Activated CD4-positive, alpha-beta T cell treated with anti-CD3 and anti-CD28 coated beads, Interleukin-2, amount 10 ng/mL, durations not matched to agents 7 days and 5 days (primary cell): ENCODE measurements at regions of chr17 and their contacts with region 1.

Region 1: DNA sequence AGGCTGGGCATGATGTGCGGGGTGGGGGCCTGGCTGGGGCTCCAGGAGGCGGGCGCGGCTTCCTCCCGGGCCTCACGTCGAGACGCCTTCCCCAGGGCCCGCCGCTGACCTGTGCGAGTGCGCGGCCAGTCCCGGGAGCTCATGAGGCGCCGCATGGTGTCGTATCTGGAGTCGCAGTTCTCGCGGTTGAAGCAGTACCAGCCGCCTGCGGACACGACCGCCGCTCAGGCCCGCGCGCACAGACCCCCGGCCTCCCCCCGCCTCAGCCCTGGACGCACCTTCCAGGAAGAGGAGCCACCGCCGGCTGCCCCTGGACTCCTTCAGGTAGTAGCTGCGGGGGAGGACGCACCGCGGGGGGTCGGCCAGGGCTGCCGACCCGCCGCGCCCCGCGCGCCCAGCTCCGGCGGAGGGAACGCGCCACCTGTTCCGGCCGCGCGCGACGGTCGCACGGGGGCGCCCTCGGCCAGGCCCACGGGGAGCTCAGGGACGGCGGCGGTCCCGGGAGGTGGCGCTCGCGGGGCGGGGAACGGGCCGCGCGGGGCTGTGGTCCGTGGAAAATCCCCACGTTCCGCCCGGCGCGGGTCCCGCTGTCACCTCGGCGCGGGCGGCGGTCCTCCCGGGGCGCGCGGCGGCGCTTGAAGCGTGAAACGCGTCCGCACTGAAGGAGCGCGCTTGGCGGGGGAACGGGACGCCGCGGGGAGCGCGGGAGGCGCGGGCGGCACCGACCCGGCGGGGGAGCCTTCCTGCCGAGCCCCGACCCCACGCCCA is 1.4 kb downstream of the NOTUM start:
- DNase-seq: peak; percentile 78
- H3K4me3 Mint-ChIP-seq: no peak overlapping the region
- H3K27ac Mint-ChIP-seq: no peak overlapping the region
- H3K4me1 Mint-ChIP-seq: peaks cover 4% of the 10 kb centered on the region
- H3K27me3 Mint-ChIP-seq: peaks cover 36% of the 10 kb centered on the region

Region 2: DNA sequence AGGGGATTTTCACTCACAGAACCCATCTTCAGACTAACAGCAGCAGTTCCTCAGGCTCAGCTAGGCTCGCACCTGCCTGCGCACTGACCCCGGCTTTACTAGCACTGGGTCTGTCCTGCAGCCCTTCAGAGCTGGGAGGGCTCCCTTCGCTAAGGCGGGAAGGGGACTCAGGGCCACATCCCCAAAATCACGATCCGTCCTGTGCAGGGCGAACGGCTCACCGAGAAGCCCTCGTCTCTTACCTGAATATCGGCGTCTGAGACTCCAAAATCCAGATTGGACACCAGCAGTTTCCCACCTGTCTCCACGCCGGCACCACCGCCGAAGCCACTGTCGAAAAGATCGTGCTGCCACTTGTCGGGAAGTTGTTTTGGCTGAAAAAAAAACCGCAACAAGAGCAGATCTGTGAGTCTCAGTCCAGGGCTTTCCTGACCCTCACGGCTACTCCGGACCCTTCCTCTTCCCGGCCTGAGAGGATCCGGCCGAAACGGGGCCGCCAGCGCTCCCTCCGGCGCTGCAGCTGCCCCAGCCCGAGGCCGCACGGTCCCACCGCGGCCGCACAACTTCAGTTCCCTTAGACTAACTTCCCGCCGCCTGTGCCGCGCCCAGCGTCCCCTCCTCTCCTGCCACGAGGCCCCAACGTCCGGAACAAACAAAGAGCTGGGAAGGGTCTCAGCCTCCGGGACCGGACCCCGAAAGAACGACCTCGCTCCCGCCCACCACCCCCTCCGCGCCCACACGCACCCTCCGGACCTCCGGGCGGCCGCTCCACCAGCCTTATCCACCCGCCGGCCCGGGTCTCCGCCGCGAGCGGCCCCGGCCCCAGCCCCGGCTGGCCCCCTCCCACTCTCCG is 68.9 kb before region 1 on chr17:
- CTCF ChIA-PET with region 1: no interaction called
- POLR2A ChIA-PET with region 1: no interaction called
- DNase-seq: peak; percentile 43
- H3K4me3 Mint-ChIP-seq: peak overlapping the region; percentile 89
- H3K27ac Mint-ChIP-seq: peak overlapping the region; percentile 99
- H3K4me1 Mint-ChIP-seq: peaks cover 31% of the 10 kb centered on the region
- H3K27me3 Mint-ChIP-seq: no peaks in the 10 kb centered on the region

Region 3: GRCh38 chr17:81917565-81918332 is 41.8 kb before region 1 on chr17 and contains the start of gene SIRT7:
- CTCF ChIA-PET with region 1: interaction called, 12 read pairs
- POLR2A ChIA-PET with region 1: no interaction called
- DNase-seq: peak; percentile 80
- H3K4me3 Mint-ChIP-seq: peak within 1 kb of the TSS; percentile 84
- H3K27ac Mint-ChIP-seq: peak within 1 kb of the TSS; percentile 90
- H3K4me1 Mint-ChIP-seq: peaks cover 36% of the 10 kb centered on the region
- H3K27me3 Mint-ChIP-seq: no peaks in the 10 kb centered on the region
- total RNA-seq, gene SIRT7: 55.6 to 71.2 TPM

Region 4: DNA sequence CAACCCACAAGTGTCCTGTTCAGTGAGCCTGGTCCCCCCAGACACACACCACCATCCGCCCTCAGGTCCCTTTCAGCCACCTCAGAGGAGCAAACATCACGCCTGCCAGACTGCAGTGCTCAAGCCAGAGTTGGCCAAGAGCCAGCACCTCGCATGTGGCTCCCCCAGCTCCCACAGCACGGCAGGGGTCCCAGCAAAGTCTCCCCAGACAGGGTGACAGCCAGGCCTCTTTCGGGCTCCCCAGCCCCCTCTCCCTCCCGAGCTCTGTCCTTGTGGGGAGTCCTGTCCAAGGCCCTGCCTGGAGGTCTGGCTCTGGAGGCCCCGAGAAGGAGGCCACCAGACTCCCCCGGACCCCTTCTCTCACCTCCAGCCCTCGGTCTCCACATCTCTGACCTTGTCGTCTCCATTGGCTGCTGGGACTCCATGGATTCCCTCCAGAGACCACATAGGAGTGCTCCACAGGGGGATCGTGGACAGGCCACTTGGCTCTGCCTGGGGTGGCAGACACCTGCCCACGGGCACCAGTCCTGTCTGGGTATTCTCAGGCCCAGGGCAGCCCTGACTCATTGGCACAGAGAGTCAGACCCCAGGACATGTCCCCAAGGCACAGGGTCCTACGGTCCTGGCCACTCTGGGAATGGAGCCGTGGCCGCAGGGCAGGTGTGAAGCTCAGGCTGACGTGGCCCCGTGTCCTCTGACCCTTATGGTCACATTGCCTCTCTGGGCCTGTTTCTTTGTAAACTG is 10.7 kb before region 1 on chr17:
- CTCF ChIA-PET with region 1: interaction called, 32 read pairs
- POLR2A ChIA-PET with region 1: no interaction called
- DNase-seq: no peak
- H3K4me3 Mint-ChIP-seq: no peak overlapping the region
- H3K27ac Mint-ChIP-seq: no peak overlapping the region
- H3K4me1 Mint-ChIP-seq: peaks cover 3% of the 10 kb centered on the region
- H3K27me3 Mint-ChIP-seq: peaks cover 2% of the 10 kb centered on the region

Region 5: DNA sequence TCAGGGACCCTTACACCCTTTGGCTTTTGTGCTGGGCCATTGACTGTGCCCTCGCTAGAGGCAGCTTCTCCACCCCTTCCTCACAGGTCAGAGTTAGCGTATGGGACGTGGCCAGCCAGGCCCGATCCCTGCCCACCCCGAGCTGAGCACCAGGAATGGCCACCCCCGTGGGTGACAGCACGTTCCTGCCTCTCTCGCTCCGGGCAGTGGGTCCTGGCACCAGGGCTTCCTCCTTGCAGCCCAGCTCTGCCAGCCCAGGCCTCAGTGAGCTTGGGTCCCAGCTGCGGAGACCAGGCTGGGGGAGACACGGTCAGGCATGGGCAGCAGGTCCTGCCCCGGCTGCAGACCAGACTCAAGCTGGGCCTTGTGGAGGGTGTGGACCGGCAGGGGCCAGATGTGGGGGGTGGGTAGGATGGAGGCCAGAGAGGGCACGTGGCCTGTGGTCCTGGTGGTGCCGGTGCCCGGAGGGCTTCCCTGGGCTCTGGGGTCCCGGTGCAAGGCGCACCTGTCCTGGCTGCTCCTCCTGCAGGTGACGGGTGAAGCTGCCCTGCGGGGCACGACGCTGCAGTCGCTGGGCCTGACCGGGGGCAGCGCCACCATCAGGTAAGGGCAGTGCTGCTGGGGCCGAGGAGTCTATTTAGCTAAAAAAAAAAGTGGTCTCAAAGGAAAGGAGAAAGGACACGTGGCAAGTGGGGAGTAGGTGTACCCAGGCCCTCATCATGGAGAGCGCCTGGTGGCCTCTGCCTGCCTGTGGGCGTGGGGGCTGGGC is 36.1 kb after region 1 on chr17:
- CTCF ChIA-PET with region 1: interaction called, 10 read pairs
- POLR2A ChIA-PET with region 1: no interaction called
- DNase-seq: no peak
- H3K4me3 Mint-ChIP-seq: no peak overlapping the region
- H3K27ac Mint-ChIP-seq: no peak overlapping the region
- H3K4me1 Mint-ChIP-seq: peaks cover 2% of the 10 kb centered on the region
- H3K27me3 Mint-ChIP-seq: no peaks in the 10 kb centered on the region

Region 6: GRCh38 chr17:82030470-82031302 is 71.1 kb after region 1 on chr17:
- CTCF ChIA-PET with region 1: interaction called, 16 read pairs
- POLR2A ChIA-PET with region 1: no interaction called
- DNase-seq: peak; percentile 86
- H3K4me3 Mint-ChIP-seq: peak overlapping the region; percentile 74
- H3K27ac Mint-ChIP-seq: peak overlapping the region; percentile 76
- H3K4me1 Mint-ChIP-seq: peaks cover 32% of the 10 kb centered on the region
- H3K27me3 Mint-ChIP-seq: no peaks in the 10 kb centered on the region

Region 7: DNA sequence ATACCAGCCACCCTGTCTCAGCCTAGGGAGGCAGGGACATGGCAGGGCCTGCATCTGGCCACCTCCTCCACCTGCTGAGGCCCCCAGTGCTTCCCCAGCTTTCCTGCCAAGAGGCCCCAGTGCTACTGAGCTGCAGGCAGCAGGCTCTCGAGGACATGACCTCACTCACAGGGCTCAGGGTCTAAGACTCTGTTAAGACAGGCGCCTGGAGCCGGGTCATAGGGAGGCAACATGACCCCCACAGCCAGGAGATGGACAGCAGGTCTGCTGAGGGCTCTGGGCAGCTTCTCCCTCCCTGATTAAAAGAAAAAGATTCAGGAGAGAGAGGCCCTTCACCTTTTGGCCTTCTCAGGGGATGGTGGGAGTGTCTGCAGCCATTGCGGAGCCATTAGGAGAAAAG is 161.7 kb after region 1 on chr17:
- CTCF ChIA-PET with region 1: no interaction called
- POLR2A ChIA-PET with region 1: no interaction called
- DNase-seq: no peak
- H3K4me3 Mint-ChIP-seq: no peak overlapping the region
- H3K27ac Mint-ChIP-seq: no peak overlapping the region
- H3K4me1 Mint-ChIP-seq: peaks cover 58% of the 10 kb centered on the region
- H3K27me3 Mint-ChIP-seq: no peaks in the 10 kb centered on the region